Left ventricle myocardium inferior (tissue), 1 donor: ENCODE measurements at regions of chr5 and their contacts with region 1.

Region 1: GRCh38 chr5:87400305-87400899 is 12.3 kb downstream of the CCNH start:
- DNase-seq: no peak
- H3K4me3 ChIP-seq: no peak overlapping the region
- H3K27ac ChIP-seq: no peak overlapping the region
- H3K4me1 ChIP-seq: peaks cover 14% of the 10 kb centered on the region
- H3K27me3 ChIP-seq: no peaks in the 10 kb centered on the region
- CTCF ChIP-seq: peak; percentile 79

Region 2: GRCh38 chr5:86500947-86501346 is 899.5 kb before region 1 on chr5:
- intact Hi-C with region 1: no loop called
- DNase-seq: no peak
- H3K4me3 ChIP-seq: no peak overlapping the region
- H3K27ac ChIP-seq: no peak overlapping the region
- H3K4me1 ChIP-seq: no peaks in the 10 kb centered on the region
- H3K27me3 ChIP-seq: no peaks in the 10 kb centered on the region
- CTCF ChIP-seq: peak; percentile 32

Region 3: DNA sequence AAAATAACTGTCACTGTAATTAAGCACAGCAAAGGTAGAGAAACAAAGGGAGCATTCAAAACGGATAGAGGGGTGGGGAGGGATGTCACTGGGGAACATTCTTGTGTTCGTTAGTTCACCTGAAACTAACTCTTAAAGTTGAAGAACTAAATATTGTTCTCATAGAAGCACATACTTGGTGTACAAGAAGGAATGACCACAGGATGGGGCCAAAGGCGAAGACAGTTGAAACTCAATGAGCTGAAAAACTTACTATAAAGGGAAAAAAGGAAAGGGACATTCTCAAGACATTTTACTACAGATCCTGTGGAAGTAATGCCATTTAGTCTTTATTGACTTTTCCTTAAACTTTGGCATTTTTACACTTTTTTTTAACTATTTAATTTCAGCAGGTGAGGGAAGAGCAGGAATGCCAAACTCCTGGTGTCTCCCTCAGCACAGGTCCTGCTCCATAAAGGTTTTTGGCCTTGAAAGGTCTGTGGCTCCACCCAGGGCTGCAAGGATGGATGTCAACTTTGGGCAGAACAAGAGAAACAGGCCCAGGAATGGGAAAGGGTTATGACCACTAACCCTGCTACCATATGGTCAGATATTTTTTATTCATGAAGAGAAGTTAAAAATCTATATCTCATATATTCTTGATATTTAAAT is 330.3 kb before region 1 on chr5:
- intact Hi-C with region 1: loop called (anchors 5 kb)
- DNase-seq: no peak
- H3K4me3 ChIP-seq: no peak overlapping the region
- H3K27ac ChIP-seq: no peak overlapping the region
- H3K4me1 ChIP-seq: no peaks in the 10 kb centered on the region
- H3K27me3 ChIP-seq: no peaks in the 10 kb centered on the region
- CTCF ChIP-seq: peak; percentile 62

Region 4: DNA sequence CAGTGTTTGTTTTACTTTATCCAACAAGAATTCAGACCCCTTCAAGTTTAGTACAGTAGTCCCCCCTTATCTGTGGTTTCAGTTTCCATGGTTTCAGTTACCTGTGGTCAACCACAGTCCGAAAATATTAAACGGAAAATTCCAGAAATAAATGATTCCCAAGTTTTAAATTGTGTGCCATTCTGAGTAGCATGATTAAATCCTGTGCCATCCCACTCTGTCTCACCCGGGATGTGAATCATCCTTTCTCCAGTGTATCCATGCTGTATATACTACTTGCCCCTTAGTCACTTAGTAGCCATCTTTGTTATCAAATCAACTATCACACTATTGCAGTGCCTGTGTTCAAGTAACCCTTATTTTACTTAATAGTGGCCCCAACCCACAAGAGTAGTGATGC is 286.5 kb before region 1 on chr5:
- intact Hi-C with region 1: no loop called
- DNase-seq: no peak
- H3K4me3 ChIP-seq: no peak overlapping the region
- H3K27ac ChIP-seq: no peak overlapping the region
- H3K4me1 ChIP-seq: no peaks in the 10 kb centered on the region
- H3K27me3 ChIP-seq: no peaks in the 10 kb centered on the region
- CTCF ChIP-seq: no peak

Region 5: GRCh38 chr5:87327998-87328397 is 72.4 kb before region 1 on chr5:
- intact Hi-C with region 1: no loop called
- DNase-seq: no peak
- H3K4me3 ChIP-seq: no peak overlapping the region
- H3K27ac ChIP-seq: no peak overlapping the region
- H3K4me1 ChIP-seq: peaks cover 19% of the 10 kb centered on the region
- H3K27me3 ChIP-seq: no peaks in the 10 kb centered on the region
- CTCF ChIP-seq: no peak

Region 6: DNA sequence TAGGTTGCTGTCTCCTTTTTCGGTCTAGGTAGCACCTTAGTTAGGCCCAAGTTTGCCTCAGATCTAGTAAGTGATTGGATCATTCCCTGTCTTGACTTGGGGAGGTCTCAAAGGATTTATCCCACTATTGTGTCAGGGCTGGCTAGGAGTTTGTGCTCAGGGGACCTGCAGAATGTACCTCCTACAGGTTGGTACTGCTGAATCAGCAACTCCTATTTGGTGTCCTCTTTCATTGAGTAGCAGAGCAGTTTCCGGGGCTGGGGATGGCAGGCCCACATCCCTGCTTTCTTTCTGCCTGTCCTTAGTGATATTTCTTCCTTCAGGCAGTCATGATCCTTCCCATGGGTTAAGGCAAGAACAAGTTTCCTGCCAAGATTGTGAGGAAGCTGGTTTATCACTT is 205.3 kb after region 1 on chr5:
- intact Hi-C with region 1: no loop called
- DNase-seq: no peak
- H3K4me3 ChIP-seq: no peak overlapping the region
- H3K27ac ChIP-seq: no peak overlapping the region
- H3K4me1 ChIP-seq: no peaks in the 10 kb centered on the region
- H3K27me3 ChIP-seq: no peaks in the 10 kb centered on the region
- CTCF ChIP-seq: no peak